ENCODE measurements at regions of chr15 and their contacts with region 1.

Region 1: DNA sequence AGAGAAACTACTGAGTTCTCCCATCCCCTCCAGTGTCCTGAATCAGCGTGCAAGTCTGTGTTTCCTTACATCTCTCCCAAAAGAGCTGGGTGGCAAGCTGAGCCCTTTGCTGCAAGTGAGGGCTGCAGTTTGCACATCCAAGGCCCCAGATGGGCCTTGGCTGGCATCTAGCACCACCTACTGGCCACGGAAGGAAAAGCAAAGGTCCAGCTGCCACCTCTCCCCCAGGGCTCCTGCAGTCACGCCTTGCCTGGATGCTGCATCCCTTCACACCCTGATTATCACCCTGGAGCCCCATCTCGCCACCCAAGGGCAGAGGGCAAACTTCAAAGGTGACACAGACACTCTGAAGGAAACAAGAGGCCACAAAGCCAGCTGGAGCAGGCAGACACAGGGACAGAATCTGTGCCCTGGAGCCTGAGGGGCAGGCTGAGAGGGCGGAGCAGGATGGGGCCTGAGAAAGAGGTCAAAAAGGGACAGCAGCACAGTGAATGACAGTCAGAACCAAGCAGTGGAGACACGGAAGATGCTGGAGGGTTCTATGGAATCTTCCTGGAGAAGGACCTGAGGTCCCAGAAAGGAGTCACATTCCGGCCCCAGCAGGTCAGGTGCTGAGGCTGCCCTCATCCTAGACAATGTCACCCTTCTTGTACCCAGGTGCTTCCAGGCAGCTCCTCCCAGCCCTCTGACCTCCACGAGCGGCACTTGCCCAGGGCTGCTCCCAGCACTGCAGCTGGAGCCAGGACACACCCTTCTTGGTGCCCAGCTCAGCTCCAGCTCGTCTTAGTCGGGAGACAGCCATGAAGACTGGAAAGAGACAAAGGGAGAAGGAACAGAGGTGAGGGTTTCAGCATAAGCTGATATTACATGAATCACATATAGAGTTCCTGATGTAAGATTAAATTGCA is 18.3 kb upstream of the NTRK3 start:
- DNase-seq: peak; percentile 87
- ATAC-seq: peak; percentile 94
- H3K4me3 Mint-ChIP-seq: no peak overlapping the region
- H3K27ac Mint-ChIP-seq: no peak overlapping the region
- H3K4me1 Mint-ChIP-seq: no peaks in the 10 kb centered on the region
- H3K27me3 Mint-ChIP-seq: peaks cover 10% of the 10 kb centered on the region
- CTCF ChIP-seq: peak; percentile 87

Region 2: GRCh38 chr15:88077296-88078020 is 197.3 kb before region 1 on chr15:
- CTCF ChIA-PET with region 1: no interaction called
- POLR2A ChIA-PET with region 1: no interaction called
- DNase-seq: no peak
- ATAC-seq: no peak
- H3K4me3 Mint-ChIP-seq: no peak overlapping the region
- H3K27ac Mint-ChIP-seq: no peak overlapping the region; the same call in 1 of the 2 replicates
- H3K4me1 Mint-ChIP-seq: peaks cover 41% of the 10 kb centered on the region
- H3K27me3 Mint-ChIP-seq: no peaks in the 10 kb centered on the region
- CTCF ChIP-seq: no peak

Region 3: GRCh38 chr15:88246666-88247446 is 28.0 kb before region 1 on chr15:
- CTCF ChIA-PET with region 1: interaction called, 38 read pairs
- POLR2A ChIA-PET with region 1: no interaction called
- DNase-seq: peak; percentile 84
- ATAC-seq: peak; percentile 89
- H3K4me3 Mint-ChIP-seq: peak overlapping the region; percentile 52
- H3K27ac Mint-ChIP-seq: no peak overlapping the region
- H3K4me1 Mint-ChIP-seq: peaks cover 17% of the 10 kb centered on the region
- H3K27me3 Mint-ChIP-seq: peaks cover 3% of the 10 kb centered on the region; the same call in 1 of the 2 replicates
- CTCF ChIP-seq: peak; percentile 94

Region 4: GRCh38 chr15:88299497-88299896 is 24.7 kb after region 1 on chr15:
- CTCF ChIA-PET with region 1: interaction called, 10 read pairs
- POLR2A ChIA-PET with region 1: no interaction called
- DNase-seq: peak; percentile 22
- ATAC-seq: peak; percentile 52
- H3K4me3 Mint-ChIP-seq: no peak overlapping the region
- H3K27ac Mint-ChIP-seq: no peak overlapping the region
- H3K4me1 Mint-ChIP-seq: peaks cover 17% of the 10 kb centered on the region
- H3K27me3 Mint-ChIP-seq: peaks cover 3% of the 10 kb centered on the region; the same call in 1 of the 2 replicates
- CTCF ChIP-seq: no peak

Measured in WTC11 (cell line).